ENCODE measurements at regions of chr2 and their contacts with region 1.

Region 1: DNA sequence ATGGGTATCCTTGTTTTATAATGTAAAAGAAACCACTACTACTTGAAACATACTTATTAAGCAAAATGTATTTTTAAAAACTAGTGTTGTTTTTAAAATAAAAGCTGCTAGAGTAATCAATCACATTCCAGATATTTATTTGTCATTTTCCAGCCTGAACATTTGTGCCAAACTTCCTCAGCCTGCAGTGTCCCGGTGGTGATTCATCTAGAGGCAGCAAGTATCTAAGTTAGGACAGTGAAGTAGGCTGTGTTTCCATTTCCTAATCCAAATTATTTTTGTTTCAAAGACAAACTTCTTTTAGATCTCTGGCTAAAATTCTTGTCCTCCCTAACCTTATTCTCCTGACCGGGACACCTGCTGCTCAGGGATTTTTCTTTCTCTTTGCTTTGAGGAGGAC is 12.8 kb upstream of the GCG start:
- DNase-seq: no peak
- H3K4me3 Mint-ChIP-seq: no peak overlapping the region
- H3K27ac Mint-ChIP-seq: no peak overlapping the region
- H3K4me1 Mint-ChIP-seq: peaks cover 8% of the 10 kb centered on the region
- H3K27me3 Mint-ChIP-seq: peaks cover 11% of the 10 kb centered on the region

Region 2: DNA sequence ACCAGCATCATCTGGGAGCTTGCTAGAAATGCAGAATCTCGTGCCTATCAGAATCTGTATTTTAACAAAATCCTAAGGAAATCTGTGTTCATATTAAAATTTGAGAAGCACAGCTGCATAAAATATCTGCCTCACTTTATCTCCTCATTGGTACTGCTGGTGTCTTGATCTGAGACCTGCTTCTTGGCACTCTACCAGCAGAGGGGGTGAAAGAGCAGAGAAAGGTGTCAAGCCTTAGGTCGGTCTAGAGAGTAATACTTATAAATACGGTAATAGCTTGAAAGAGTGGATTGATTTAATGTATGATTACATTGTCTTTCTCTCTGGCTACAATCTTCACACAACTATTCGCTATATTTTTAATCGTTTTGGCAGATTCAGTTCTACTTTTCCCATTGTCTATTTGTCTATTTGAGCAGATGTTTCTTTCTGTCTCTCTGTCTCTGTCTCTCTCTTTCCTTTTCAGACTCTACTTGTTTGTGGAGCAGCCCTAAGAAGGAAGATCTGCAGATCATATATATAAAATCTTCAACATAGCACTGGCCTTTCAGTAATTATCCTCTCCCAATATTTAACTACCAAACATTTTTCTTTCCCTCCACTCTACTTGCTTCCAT is 11.1 kb before region 1 on chr2:
- CTCF ChIA-PET with region 1: interaction called, 13 read pairs
- intact Hi-C with region 1: no loop called
- DNase-seq: peak; percentile 81
- H3K4me3 Mint-ChIP-seq: no peak overlapping the region
- H3K27ac Mint-ChIP-seq: no peak overlapping the region
- H3K4me1 Mint-ChIP-seq: no peaks in the 10 kb centered on the region
- H3K27me3 Mint-ChIP-seq: peaks cover 14% of the 10 kb centered on the region

Region 3: DNA sequence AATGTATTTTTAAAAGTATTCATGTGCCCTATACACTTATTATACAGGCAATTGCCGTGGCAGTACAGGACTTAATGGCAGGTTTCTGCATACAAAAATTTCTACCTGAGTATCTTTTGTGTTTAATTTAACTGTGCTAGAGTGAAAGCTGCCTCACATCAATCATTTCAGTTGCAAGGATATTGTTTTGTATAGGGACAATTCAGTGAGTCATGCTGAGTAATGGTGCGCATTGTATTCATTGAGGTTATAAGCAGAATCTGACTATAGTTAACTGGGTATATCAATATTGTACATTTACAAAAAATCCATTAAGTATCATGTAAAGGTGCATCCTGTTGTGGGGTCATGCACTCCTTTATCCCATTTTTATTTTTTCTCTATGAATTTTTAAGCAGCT is 300.6 kb after region 1 on chr2:
- CTCF ChIA-PET with region 1: no interaction called
- intact Hi-C with region 1: no loop called
- DNase-seq: no peak
- H3K4me3 Mint-ChIP-seq: no peak overlapping the region
- H3K27ac Mint-ChIP-seq: no peak overlapping the region
- H3K4me1 Mint-ChIP-seq: no peaks in the 10 kb centered on the region
- H3K27me3 Mint-ChIP-seq: peaks cover 2% of the 10 kb centered on the region